ENCODE measurements at regions of chr11 and their contacts with region 1.

Region 1: GRCh38 chr11:122697636-122698167 is 42.2 kb downstream of the UBASH3B start:
- DNase-seq: peak in 13 of 14 experiments; percentile 28 to 76 (median 47)
- ATAC-seq: peak; percentile 80
- H3K4me3 ChIP-seq: peak overlapping the region; percentile 8
- H3K4me3 Mint-ChIP-seq: peak overlapping the region; percentile 75
- H3K27ac ChIP-seq: peak overlapping the region; percentile 77 to 80
- H3K27ac Mint-ChIP-seq: peak overlapping the region; percentile 90
- H3K4me1 ChIP-seq: peaks cover 84% of the 10 kb centered on the region
- H3K4me1 Mint-ChIP-seq: peaks cover 91% of the 10 kb centered on the region
- H3K27me3 ChIP-seq: no peaks in the 10 kb centered on the region
- H3K27me3 Mint-ChIP-seq: no peaks in the 10 kb centered on the region
- CTCF ChIP-seq: no peak

Region 2: GRCh38 chr11:122578168-122578825 is 119.4 kb before region 1 on chr11:
- CTCF ChIA-PET with region 1: interaction called, 3 read pairs
- POLR2A ChIA-PET with region 1: no interaction called
- intact Hi-C with region 1: loop called in 1 of 2 experiments (anchors 2 kb)
- DNase-seq: no peak
- ATAC-seq: no peak
- H3K4me3 ChIP-seq: no peak overlapping the region
- H3K4me3 Mint-ChIP-seq: no peak overlapping the region
- H3K27ac ChIP-seq: no peak overlapping the region
- H3K27ac Mint-ChIP-seq: no peak overlapping the region
- H3K4me1 ChIP-seq: peaks cover 8% of the 10 kb centered on the region
- H3K4me1 Mint-ChIP-seq: peaks cover 7% of the 10 kb centered on the region
- H3K27me3 ChIP-seq: no peaks in the 10 kb centered on the region
- H3K27me3 Mint-ChIP-seq: peaks cover 8% of the 10 kb centered on the region
- CTCF ChIP-seq: no peak

Region 3: DNA sequence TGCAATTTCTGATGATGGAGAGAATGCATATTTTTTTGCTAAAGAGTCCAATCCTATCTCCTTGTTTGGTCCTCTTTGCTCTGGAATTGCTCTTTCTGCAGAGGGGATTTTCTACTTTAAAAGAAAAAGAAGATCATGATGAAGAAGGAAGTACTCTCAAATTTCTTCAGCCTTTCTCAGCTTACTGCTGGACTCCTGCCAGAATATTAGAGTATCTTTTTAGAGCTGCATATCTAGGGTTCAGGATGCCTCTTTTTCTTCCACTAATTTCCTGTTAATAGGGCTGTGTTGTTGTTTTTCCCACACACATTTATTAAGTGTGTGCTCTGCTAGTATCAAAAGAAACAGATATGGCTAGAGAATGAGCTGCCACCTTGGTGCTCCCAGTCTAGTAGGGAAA is 24.0 kb before region 1 on chr11:
- CTCF ChIA-PET with region 1: no interaction called
- POLR2A ChIA-PET with region 1: interaction called, 91 read pairs
- intact Hi-C with region 1: loop called in 1 of 2 experiments (anchors 2 kb)
- DNase-seq: no peak
- ATAC-seq: no peak
- H3K4me3 ChIP-seq: no peak overlapping the region
- H3K4me3 Mint-ChIP-seq: no peak overlapping the region
- H3K27ac ChIP-seq: peak overlapping the region in 1 of 2 donors; percentile 9
- H3K27ac Mint-ChIP-seq: peak overlapping the region; percentile 85
- H3K4me1 ChIP-seq: peaks cover 98% of the 10 kb centered on the region
- H3K4me1 Mint-ChIP-seq: peaks cover 83% of the 10 kb centered on the region
- H3K27me3 ChIP-seq: no peaks in the 10 kb centered on the region
- H3K27me3 Mint-ChIP-seq: no peaks in the 10 kb centered on the region
- CTCF ChIP-seq: no peak

Region 4: GRCh38 chr11:122717264-122717867 is 19.7 kb after region 1 on chr11:
- CTCF ChIA-PET with region 1: interaction called, 4 read pairs
- POLR2A ChIA-PET with region 1: interaction called, 32 read pairs
- intact Hi-C with region 1: no loop called
- DNase-seq: peak in 4 of 14 experiments; percentile 29 to 71 (median 40)
- ATAC-seq: no peak
- H3K4me3 ChIP-seq: no peak overlapping the region
- H3K4me3 Mint-ChIP-seq: no peak overlapping the region
- H3K27ac ChIP-seq: peak overlapping the region in 1 of 2 donors; percentile 3
- H3K27ac Mint-ChIP-seq: peak overlapping the region; percentile 42
- H3K4me1 ChIP-seq: peaks cover 51% of the 10 kb centered on the region
- H3K4me1 Mint-ChIP-seq: peaks cover 66% of the 10 kb centered on the region
- H3K27me3 ChIP-seq: no peaks in the 10 kb centered on the region
- H3K27me3 Mint-ChIP-seq: no peaks in the 10 kb centered on the region
- CTCF ChIP-seq: no peak

Region 5: DNA sequence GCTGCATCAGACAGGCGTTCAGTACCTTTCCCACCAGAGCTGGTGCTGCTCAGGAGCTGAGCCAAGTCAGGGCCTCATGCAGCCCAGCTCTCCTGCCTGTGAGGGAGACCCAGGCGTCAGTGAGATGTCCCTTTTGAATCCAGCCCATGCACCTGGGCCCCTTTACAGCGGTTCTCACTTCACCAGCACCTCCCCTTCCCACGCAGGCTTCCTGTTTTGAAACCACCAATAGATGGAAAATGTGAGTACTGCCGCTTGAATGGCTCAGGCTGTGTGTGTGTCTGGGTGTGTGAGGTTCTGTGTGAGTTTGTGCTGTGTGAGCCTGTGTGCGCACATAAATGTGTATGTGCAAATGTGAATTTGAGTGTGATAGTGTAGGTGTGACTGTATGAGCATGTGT is 46.2 kb after region 1 on chr11:
- CTCF ChIA-PET with region 1: interaction called, 6 read pairs
- POLR2A ChIA-PET with region 1: interaction called, 69 read pairs
- intact Hi-C with region 1: loop called (anchors 2 to 5 kb)
- DNase-seq: peak; percentile 36 to 92 (median 70)
- ATAC-seq: peak; percentile 71
- H3K4me3 ChIP-seq: peak overlapping the region; percentile 34
- H3K4me3 Mint-ChIP-seq: no peak overlapping the region
- H3K27ac ChIP-seq: peak overlapping the region; percentile 66 to 71
- H3K27ac Mint-ChIP-seq: no peak overlapping the region
- H3K4me1 ChIP-seq: peaks cover 77% of the 10 kb centered on the region
- H3K4me1 Mint-ChIP-seq: peaks cover 36% of the 10 kb centered on the region
- H3K27me3 ChIP-seq: no peaks in the 10 kb centered on the region
- H3K27me3 Mint-ChIP-seq: no peaks in the 10 kb centered on the region
- CTCF ChIP-seq: no peak

Measured in CD4-positive, alpha-beta T cell (primary cell).